Activated CD4-positive, alpha-beta T cell treated with anti-CD3 and anti-CD28 coated beads, Interleukin-2, amount 10 ng/mL, durations not matched to agents 7 days and 5 days (primary cell): ENCODE measurements at regions of chr20 and their contacts with region 1.

Region 1: DNA sequence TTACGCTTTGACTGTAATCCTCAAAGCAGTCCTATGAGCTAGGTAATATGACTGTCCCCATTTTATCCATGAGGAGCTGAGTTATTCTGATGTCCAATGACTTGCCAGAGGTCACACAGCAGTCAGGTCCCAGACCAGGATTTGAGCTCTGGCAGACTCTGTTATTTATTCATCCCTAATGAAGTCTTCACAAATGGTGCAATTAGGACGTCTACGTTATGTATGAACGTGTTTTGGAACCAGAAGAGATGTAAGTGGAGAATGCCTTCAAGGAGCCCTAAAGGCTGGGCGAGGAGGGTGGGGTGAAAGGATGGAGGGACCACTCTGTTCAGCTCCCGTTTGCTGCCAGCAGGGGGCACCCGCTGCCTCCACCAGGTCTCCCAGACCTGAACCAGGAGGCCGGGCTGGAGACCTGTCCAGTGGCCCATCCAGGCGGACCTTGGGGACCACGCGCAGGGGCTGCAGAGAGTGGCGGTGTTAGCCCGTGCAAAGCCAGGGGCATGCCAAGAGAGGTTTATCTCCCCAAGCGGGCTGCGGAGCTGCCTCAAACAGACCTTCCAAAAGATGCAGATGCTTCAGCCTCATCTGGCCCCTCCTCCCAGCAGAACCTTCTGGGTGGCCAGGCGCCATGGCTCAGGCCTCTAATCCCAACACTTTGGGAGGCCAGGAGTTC is 15.2 kb upstream of the ZNF335 start:
- DNase-seq: peak; percentile 79
- H3K4me3 Mint-ChIP-seq: no peak overlapping the region
- H3K27ac Mint-ChIP-seq: no peak overlapping the region
- H3K4me1 Mint-ChIP-seq: peaks cover 10% of the 10 kb centered on the region
- H3K27me3 Mint-ChIP-seq: peaks cover 24% of the 10 kb centered on the region

Region 2: GRCh38 chr20:45592574-45593189 is 394.6 kb before region 1 on chr20:
- CTCF ChIA-PET with region 1: no interaction called
- POLR2A ChIA-PET with region 1: no interaction called
- DNase-seq: peak; percentile 33
- H3K4me3 Mint-ChIP-seq: no peak overlapping the region
- H3K27ac Mint-ChIP-seq: no peak overlapping the region
- H3K4me1 Mint-ChIP-seq: no peaks in the 10 kb centered on the region
- H3K27me3 Mint-ChIP-seq: peaks cover 37% of the 10 kb centered on the region

Region 3: DNA sequence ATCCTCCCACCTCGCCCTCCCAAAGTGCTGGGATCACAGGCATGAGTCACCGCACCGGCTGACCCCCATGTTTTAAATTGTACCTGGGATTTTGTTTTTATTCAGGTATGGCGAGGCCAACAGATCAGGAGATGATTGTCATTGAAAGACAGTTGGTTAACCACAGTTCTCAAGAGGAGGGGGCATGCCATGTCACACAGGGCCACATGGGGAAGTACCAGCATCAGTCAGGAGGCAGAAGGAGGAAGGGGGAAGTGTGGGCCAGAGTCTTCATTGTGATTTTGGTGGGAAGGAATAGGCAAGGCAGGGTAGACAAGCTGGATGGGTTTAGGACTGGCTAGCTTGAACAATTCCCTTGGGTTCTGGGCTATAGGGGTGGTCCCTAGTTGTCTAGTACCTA is 11.5 kb after region 1 on chr20:
- CTCF ChIA-PET with region 1: interaction called, 30 read pairs
- POLR2A ChIA-PET with region 1: no interaction called
- DNase-seq: no peak
- H3K4me3 Mint-ChIP-seq: no peak overlapping the region
- H3K27ac Mint-ChIP-seq: no peak overlapping the region
- H3K4me1 Mint-ChIP-seq: peaks cover 54% of the 10 kb centered on the region
- H3K27me3 Mint-ChIP-seq: peaks cover 9% of the 10 kb centered on the region

Region 4: DNA sequence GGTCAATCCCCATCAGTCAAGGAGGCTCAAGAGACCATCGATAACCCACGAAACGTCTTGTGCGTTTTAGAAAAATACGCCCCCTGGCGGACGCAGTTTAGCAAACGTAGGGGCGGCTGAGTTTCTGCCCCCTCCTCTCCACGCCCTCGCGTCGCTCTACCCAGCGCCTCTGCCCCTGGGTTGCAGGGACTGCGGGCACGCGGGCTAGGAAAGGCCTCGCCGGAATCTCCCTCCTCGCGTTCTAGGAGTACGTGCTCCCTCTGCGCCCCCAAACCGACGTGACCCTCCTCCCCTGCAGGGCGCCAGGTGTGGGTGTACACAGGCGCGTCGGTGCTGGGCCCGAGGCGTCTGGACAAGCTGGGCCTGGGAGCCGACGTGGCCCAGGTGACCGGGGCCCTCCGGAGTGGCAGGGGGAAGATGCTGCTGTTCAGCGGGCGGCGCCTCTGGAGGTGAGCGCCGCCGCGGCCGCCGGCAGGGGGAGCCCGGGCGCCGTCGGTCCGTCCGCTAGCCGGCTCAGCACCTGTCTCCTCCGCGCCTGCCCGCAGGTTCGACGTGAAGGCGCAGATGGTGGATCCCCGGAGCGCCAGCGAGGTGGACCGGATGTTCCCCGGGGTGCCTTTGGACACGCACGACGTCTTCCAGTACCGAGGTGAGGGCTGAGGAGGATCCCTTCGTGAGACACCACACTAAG is 26.7 kb after region 1 on chr20:
- CTCF ChIA-PET with region 1: interaction called, 33 read pairs
- POLR2A ChIA-PET with region 1: no interaction called
- DNase-seq: peak; percentile 66
- H3K4me3 Mint-ChIP-seq: no peak overlapping the region
- H3K27ac Mint-ChIP-seq: no peak overlapping the region
- H3K4me1 Mint-ChIP-seq: peaks cover 45% of the 10 kb centered on the region
- H3K27me3 Mint-ChIP-seq: peaks cover 63% of the 10 kb centered on the region

Region 5: DNA sequence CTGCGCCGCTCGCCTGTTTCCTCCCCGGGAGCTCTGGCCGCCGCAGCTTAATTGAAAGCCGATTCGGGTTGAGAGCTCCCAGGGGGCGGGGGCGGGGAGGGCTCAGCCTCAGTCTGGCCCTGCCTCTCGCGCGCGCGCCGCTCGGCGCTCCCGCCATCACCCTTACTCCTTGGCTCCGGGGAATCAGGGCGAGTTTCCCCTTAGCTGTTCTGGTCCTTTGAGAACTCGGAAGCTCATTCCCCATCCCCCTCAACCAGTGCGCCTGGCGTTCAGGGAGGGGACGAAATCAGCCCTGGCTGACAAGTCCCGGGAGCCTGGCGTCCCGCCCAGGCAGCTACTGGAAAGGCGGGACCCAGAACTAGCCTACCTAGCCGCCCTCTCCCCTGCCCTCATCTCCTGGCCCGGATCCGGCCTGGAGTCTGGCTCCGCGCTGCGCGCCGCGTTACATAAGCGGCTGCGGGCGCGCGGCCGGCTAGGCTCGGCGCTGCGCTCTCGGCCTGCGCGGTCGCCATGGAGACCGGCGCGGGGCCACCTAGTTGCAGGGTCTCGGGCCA is 44.5 kb after region 1 on chr20:
- CTCF ChIA-PET with region 1: no interaction called
- POLR2A ChIA-PET with region 1: no interaction called
- DNase-seq: no peak
- H3K4me3 Mint-ChIP-seq: no peak overlapping the region
- H3K27ac Mint-ChIP-seq: no peak overlapping the region
- H3K4me1 Mint-ChIP-seq: no peaks in the 10 kb centered on the region
- H3K27me3 Mint-ChIP-seq: peaks cover 52% of the 10 kb centered on the region